H1 (cell line): ENCODE measurements at regions of chr14 and their contacts with region 1.

Region 1: GRCh38 chr14:92783816-92784431 is 10.2 kb upstream of the GOLGA5 start:
- DNase-seq: no peak
- H3K4me3 ChIP-seq: no peak overlapping the region
- H3K27ac ChIP-seq: no peak overlapping the region
- H3K4me1 ChIP-seq: peaks cover 0 to 3% (median 0%) of the 10 kb centered on the region in 4 experiments; a peak in 1 of 7 replicates
- H3K27me3 ChIP-seq: no peaks in the 10 kb centered on the region; a peak in 1 of 7 replicates
- CTCF ChIP-seq: peak in 2 of 3 experiments; percentile 37 to 38; a peak in 2 of 4 replicates
- EP300 ChIP-seq: no peak
- POLR2A ChIP-seq: no peak
- RAD21 ChIP-seq: peak; percentile 60 to 62

Region 2: DNA sequence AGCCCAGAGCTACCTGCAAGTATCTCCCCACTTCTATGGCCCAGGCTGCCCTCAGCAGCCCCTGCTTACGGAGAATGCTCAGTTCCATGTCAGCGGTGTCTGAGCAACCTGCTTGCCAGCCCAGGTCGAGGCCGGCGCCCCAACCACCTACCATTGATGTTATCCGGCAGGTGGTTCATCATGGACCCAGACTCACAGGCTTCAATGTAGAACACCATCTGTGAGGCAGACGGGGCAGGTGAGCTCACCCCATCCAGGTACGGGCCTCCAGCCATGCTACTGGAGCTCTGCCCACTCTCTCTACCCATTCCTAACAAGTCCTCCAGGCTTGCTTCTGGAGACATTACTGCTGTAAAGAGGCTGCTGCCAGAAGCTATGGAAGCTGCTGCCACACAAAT is 71.3 kb before region 1 on chr14:
- CTCF ChIA-PET with region 1: interaction called, 40 read pairs
- POLR2A ChIA-PET with region 1: no interaction called
- DNase-seq: no peak
- H3K4me3 ChIP-seq: no peak overlapping the region
- H3K27ac ChIP-seq: no peak overlapping the region
- H3K4me1 ChIP-seq: peaks cover 0 to 3% (median 0%) of the 10 kb centered on the region in 4 experiments; a peak in 1 of 7 replicates
- H3K27me3 ChIP-seq: no peaks in the 10 kb centered on the region
- CTCF ChIP-seq: no peak
- EP300 ChIP-seq: no peak
- POLR2A ChIP-seq: no peak
- RAD21 ChIP-seq: no peak

Region 3: GRCh38 chr14:92719890-92720323 is 64.0 kb before region 1 on chr14:
- CTCF ChIA-PET with region 1: interaction called, 40 read pairs
- POLR2A ChIA-PET with region 1: no interaction called
- DNase-seq: no peak
- H3K4me3 ChIP-seq: no peak overlapping the region
- H3K27ac ChIP-seq: no peak overlapping the region
- H3K4me1 ChIP-seq: no peaks in the 10 kb centered on the region
- H3K27me3 ChIP-seq: no peaks in the 10 kb centered on the region; a peak in 1 of 7 replicates
- CTCF ChIP-seq: no peak
- EP300 ChIP-seq: no peak
- POLR2A ChIP-seq: no peak
- RAD21 ChIP-seq: no peak

Region 4: GRCh38 chr14:92813201-92813600 is 29.3 kb after region 1 on chr14:
- CTCF ChIA-PET with region 1: no interaction called
- POLR2A ChIA-PET with region 1: no interaction called
- DNase-seq: no peak
- H3K4me3 ChIP-seq: no peak overlapping the region
- H3K27ac ChIP-seq: no peak overlapping the region
- H3K4me1 ChIP-seq: no peaks in the 10 kb centered on the region
- H3K27me3 ChIP-seq: no peaks in the 10 kb centered on the region
- CTCF ChIP-seq: no peak
- EP300 ChIP-seq: no peak
- POLR2A ChIP-seq: no peak
- RAD21 ChIP-seq: no peak

Region 5: DNA sequence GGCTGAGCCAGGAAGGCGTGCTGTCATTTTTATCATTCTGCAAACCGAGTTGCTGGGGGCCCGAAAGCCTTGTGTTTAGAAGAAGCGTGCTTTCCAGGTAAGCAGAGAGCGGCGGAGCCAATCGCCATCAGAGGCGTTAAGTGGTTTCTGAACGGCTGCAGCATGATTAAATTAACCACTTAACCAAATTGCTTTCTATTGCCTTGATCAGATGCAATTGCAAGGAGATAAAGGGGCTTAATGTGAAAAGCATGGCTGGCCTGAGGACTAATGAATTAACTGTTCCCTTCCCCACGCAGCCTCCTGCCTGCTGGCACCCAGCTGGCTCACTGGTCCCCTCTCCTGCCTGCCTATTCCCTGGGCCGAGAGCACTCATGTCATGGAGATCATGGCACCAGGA is 102.4 kb after region 1 on chr14:
- CTCF ChIA-PET with region 1: no interaction called
- POLR2A ChIA-PET with region 1: no interaction called
- DNase-seq: no peak
- H3K4me3 ChIP-seq: no peak overlapping the region
- H3K27ac ChIP-seq: no peak overlapping the region
- H3K4me1 ChIP-seq: no peaks in the 10 kb centered on the region; a peak in 1 of 7 replicates
- H3K27me3 ChIP-seq: no peaks in the 10 kb centered on the region; a peak in 3 of 7 replicates
- CTCF ChIP-seq: no peak
- EP300 ChIP-seq: no peak
- POLR2A ChIP-seq: no peak
- RAD21 ChIP-seq: no peak